Naive thymus-derived CD4-positive, alpha-beta T cell (primary cell): ENCODE measurements at regions of chr12 and their contacts with region 1.

Region 1: DNA sequence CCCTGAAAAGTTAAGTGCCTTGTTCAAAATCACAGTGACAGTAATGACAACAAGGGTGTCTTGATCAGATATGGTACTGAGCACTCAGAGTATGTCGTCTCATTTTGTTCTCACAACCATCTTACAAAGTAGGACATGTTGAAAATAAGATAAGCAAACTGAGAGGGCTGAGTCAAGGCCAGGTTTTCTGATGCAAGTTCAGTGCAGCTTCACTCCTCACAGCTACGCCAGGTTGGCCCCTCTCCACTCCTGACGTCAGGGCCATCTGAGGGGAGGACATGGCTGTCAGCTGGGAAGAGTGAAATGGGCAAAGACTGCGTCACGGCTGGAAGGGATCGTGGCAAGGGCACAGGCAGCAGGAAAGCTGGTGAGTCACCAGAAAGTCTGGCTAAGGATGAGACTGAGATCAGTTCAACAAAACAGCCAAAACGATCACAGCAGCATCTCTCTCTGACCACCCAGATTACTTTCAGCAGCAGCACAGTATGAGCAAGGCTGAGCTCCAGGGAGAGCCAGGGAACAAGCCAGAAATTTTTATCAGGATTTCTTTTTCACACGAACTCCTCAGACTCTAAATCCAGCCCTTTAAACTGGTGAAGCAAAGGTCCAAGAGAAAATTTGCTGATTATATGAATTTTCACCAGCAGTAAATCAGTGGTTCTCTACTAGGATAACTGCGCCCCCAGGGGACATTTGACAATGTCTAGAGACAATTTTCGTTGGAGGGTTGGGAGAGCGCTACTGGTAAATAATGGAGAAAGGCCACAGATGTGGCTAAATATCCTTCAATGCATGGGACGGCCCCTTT is 297.9 kb upstream of the AMIGO2 start:
- DNase-seq: no peak
- ATAC-seq: no peak
- H3K4me3 ChIP-seq: no peak overlapping the region
- H3K4me3 Mint-ChIP-seq: peak overlapping the region in 3 of 10 donors; percentile 4 to 28 (median 8)
- H3K27ac ChIP-seq: no peak overlapping the region
- H3K27ac Mint-ChIP-seq: peak overlapping the region in 6 of 9 donors; percentile 24 to 81 (median 58)
- H3K4me1 ChIP-seq: peaks cover 1 to 7% of the 10 kb centered on the region in 2 donors
- H3K4me1 Mint-ChIP-seq: peaks cover 16 to 57% (median 38%) of the 10 kb centered on the region in 7 donors
- H3K27me3 ChIP-seq: no peaks in the 10 kb centered on the region
- H3K27me3 Mint-ChIP-seq: no peaks in the 10 kb centered on the region

Region 2: GRCh38 chr12:47391566-47391965 is 13.9 kb after region 1 on chr12:
- CTCF ChIA-PET with region 1: no interaction called
- POLR2A ChIA-PET with region 1: interaction called, 10 read pairs
- intact Hi-C with region 1: no loop called
- DNase-seq: peak; percentile 22 to 78 (median 67)
- ATAC-seq: peak; percentile 91
- H3K4me3 ChIP-seq: no peak overlapping the region
- H3K4me3 Mint-ChIP-seq: peak overlapping the region; percentile 32 to 88 (median 69)
- H3K27ac ChIP-seq: peak overlapping the region; percentile 66
- H3K27ac Mint-ChIP-seq: peak overlapping the region; percentile 91 to 100 (median 97)
- H3K4me1 ChIP-seq: peaks cover 49 to 58% of the 10 kb centered on the region in 2 donors
- H3K4me1 Mint-ChIP-seq: peaks cover 44 to 79% (median 76%) of the 10 kb centered on the region in 7 donors
- H3K27me3 ChIP-seq: no peaks in the 10 kb centered on the region
- H3K27me3 Mint-ChIP-seq: no peaks in the 10 kb centered on the region